Activated B cell treated with CpG ODN at 0.5 μM for 24 hours (primary cell): ENCODE measurements at regions of chr9 and their contacts with region 1.

Region 1: DNA sequence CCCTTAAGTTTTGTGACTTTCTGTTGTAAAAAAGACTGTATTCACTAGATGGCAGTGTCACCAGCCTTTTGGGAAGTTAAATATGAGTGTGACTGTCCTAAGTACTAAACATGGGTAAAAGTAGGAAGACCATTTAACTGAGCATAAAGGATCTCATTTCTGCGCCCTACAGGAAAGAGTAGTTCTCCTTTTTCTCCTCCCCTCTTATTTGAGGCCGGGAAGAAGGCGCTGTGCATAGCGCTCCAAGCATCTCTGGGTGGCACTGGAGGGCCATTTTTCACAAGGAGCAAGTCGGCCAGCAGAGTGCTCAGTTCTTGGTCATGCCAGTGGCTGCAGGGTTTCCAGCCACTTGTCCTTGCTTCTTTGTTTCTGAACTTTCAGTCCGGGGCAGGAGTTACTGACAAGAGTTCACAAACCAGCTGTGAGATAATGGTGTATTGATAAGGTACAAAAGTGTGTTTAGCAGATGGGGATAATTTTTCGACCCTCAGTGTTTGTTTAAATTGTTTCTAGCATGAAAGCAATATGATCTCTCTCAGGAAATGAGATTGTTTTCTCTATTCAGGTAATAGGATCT is 227.6 kb upstream of the DMRT1 start:
- DNase-seq: no peak
- ATAC-seq: peak; percentile 49
- H3K4me3 Mint-ChIP-seq: no peak overlapping the region
- H3K27ac Mint-ChIP-seq: no peak overlapping the region
- H3K4me1 Mint-ChIP-seq: peaks cover 7% of the 10 kb centered on the region
- H3K27me3 Mint-ChIP-seq: no peaks in the 10 kb centered on the region
- CTCF ChIP-seq: no peak

Region 2: DNA sequence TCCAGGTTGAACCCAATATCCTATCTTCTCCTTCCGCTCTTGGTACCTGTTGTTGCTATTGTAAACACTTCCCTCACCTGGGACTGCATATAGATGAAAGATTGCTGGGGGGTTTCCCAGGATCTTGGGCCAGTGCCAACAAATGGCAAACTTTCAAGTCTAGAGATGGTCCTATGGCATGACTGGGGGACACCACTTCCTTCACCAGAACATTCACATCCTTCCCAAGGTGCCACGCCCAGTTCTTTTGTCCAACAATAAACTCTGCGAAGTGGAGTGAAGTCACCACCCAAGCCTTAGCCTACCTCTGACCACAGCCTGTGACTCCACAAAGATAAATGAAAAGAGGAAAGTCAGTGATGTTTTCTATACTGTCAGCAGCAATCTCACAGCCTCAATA is 364.8 kb before region 1 on chr9:
- CTCF ChIA-PET with region 1: no interaction called
- POLR2A ChIA-PET with region 1: no interaction called
- intact Hi-C with region 1: no loop called
- DNase-seq: no peak
- ATAC-seq: no peak
- H3K4me3 Mint-ChIP-seq: no peak overlapping the region
- H3K27ac Mint-ChIP-seq: no peak overlapping the region
- H3K4me1 Mint-ChIP-seq: peaks cover 13% of the 10 kb centered on the region
- H3K27me3 Mint-ChIP-seq: no peaks in the 10 kb centered on the region
- CTCF ChIP-seq: no peak

Region 3: DNA sequence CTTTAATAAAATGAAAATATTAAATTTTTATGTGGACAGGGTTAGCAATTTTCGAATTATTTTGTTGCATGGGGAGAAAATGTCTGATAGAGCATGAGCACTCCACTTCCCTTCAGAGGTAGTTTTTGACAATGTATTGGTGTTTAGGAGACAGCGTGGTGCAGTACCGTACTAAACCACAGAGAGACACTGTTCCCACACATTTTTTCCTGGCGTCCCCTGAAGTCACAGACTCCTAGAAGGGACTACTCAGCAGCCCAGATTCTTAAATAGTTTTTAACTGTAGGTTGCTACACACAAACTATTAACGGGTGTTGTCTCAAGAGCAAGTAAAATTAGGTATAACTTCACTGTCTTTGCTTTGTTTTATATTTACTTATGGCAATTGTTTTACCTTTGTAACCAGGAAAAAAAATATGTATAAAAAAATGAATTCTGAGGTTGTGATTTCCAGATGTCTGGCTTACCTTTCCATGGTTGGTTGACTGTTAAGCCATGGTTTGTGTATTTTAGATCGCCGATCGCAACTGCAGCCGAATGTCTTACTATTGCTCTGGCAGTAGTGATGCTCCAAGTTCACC is 228.0 kb before region 1 on chr9:
- CTCF ChIA-PET with region 1: no interaction called
- POLR2A ChIA-PET with region 1: no interaction called
- intact Hi-C with region 1: no loop called
- DNase-seq: no peak
- ATAC-seq: no peak
- H3K4me3 Mint-ChIP-seq: no peak overlapping the region
- H3K27ac Mint-ChIP-seq: no peak overlapping the region
- H3K4me1 Mint-ChIP-seq: no peaks in the 10 kb centered on the region
- H3K27me3 Mint-ChIP-seq: no peaks in the 10 kb centered on the region
- CTCF ChIP-seq: no peak

Region 4: GRCh38 chr9:763692-764524 is 150.0 kb after region 1 on chr9:
- CTCF ChIA-PET with region 1: interaction called, 3 read pairs
- POLR2A ChIA-PET with region 1: no interaction called
- intact Hi-C with region 1: loop called (anchors 1 kb)
- DNase-seq: no peak
- ATAC-seq: peak; percentile 88
- H3K4me3 Mint-ChIP-seq: no peak overlapping the region
- H3K27ac Mint-ChIP-seq: no peak overlapping the region
- H3K4me1 Mint-ChIP-seq: peaks cover 5% of the 10 kb centered on the region
- H3K27me3 Mint-ChIP-seq: peaks cover 36% of the 10 kb centered on the region
- CTCF ChIP-seq: no peak

Region 5: DNA sequence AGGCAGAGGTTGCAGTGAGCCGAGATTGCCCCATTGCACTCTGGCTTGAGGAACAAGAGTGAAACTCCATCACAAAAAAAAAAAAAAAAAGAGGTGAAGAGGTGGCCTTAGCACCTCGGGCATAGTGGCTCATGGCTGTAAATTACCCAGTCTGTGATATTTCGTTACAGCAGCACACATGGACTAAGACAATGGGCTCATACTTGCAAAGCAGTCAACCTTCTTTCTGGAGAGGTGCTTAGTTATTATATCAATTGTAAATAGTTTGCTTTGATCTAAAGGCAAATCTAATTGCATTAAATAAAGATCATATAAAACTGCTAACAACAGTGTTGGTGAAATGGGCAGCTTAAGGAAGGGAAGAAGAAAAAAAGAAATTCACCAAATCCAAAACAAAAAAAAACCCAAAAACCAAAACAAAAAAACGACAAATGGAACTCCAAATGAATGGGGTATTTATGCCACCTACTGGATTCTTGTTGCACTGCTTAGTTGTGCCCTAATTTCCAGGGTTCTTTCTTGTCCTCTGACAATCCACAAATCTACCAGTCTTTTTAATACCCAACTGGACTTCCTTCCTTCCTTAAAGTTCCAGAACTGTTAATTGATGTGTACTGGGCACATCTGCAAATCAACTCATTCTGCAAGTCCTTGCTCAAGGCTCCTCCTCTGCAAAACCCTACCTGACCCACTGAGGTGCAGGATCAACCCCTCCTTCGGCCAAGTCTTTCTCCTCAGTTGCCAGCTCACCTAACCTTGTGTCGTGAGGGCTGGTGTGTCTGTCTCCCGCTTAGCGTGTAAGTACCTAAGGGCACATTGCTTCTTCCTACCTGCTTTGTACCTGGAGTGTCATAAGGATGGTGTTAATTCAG is 192.7 kb after region 1 on chr9:
- CTCF ChIA-PET with region 1: no interaction called
- POLR2A ChIA-PET with region 1: no interaction called
- intact Hi-C with region 1: loop called (anchors 1 kb)
- DNase-seq: no peak
- ATAC-seq: no peak
- H3K4me3 Mint-ChIP-seq: no peak overlapping the region
- H3K27ac Mint-ChIP-seq: no peak overlapping the region
- H3K4me1 Mint-ChIP-seq: no peaks in the 10 kb centered on the region
- H3K27me3 Mint-ChIP-seq: no peaks in the 10 kb centered on the region
- CTCF ChIP-seq: no peak

Region 6: DNA sequence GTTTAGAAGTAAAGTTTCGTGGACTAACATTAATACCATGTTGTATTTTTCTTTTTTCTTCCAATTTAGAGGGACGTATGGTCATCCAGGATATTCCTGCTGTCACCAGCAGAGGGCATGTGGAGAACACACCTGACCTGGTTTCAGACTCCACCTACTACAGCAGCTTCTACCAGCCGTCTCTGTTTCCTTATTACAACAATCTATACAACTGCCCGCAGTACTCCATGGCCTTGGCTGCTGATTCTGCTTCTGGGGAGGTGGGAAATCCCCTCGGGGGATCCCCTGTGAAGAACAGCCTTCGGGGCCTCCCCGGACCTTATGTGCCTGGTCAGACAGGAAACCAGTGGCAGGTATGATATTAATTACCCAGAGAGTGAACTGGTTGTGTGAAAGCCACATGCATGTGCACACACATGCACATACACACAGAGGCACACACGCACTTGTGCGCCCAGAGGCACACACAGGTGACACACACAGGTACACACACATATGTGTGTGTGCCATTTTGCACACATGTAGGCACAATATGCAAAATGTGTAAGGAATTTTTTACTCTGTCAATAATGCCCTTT is 280.1 kb after region 1 on chr9:
- CTCF ChIA-PET with region 1: no interaction called
- POLR2A ChIA-PET with region 1: no interaction called
- intact Hi-C with region 1: loop called (anchors 5 kb)
- DNase-seq: peak; percentile 38
- ATAC-seq: peak; percentile 98
- H3K4me3 Mint-ChIP-seq: no peak overlapping the region
- H3K27ac Mint-ChIP-seq: peak overlapping the region; percentile 47
- H3K4me1 Mint-ChIP-seq: peaks cover 13% of the 10 kb centered on the region
- H3K27me3 Mint-ChIP-seq: peaks cover 18% of the 10 kb centered on the region
- CTCF ChIP-seq: no peak

Region 7: DNA sequence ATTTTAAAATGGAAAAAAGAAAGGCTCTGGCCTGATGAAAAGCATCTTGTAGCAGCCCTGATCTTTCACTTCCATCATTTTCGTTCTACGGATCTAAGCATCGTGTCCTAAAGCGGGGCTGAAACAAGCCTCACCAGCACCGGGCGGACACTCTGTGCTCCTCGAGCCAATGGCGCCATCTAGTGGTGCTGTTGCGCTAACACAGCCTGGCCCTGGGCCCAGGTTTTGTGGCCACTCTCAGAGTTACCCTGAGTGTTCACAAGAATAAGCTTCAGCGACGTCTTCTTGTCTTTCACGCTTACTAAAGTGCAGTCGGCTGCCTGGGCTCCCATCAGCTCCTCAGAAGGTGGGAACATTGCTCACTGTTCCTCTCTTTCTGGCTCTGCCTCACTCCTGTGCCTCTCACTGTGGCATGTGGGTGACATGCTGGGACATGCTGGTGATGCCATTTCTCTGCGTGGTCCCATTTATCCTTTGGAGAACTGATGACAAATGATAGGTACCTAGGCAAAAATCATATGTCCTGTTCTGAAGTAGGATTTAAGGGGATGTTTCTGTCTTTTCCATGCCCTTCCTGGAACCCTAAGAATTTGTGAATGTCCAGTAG is 395.3 kb after region 1 on chr9:
- CTCF ChIA-PET with region 1: interaction called, 3 read pairs
- POLR2A ChIA-PET with region 1: no interaction called
- intact Hi-C with region 1: loop called (anchors 1 kb)
- DNase-seq: peak; percentile 52
- ATAC-seq: peak; percentile 95
- H3K4me3 Mint-ChIP-seq: no peak overlapping the region
- H3K27ac Mint-ChIP-seq: no peak overlapping the region
- H3K4me1 Mint-ChIP-seq: no peaks in the 10 kb centered on the region
- H3K27me3 Mint-ChIP-seq: peaks cover 29% of the 10 kb centered on the region
- CTCF ChIP-seq: peak; percentile 64

Region 8: GRCh38 chr9:2087500-2088313 is 1473.8 kb after region 1 on chr9:
- CTCF ChIA-PET with region 1: no interaction called
- POLR2A ChIA-PET with region 1: no interaction called
- intact Hi-C with region 1: loop called (anchors 5 kb)
- DNase-seq: no peak
- ATAC-seq: peak; percentile 83
- H3K4me3 Mint-ChIP-seq: no peak overlapping the region
- H3K27ac Mint-ChIP-seq: no peak overlapping the region
- H3K4me1 Mint-ChIP-seq: no peaks in the 10 kb centered on the region
- H3K27me3 Mint-ChIP-seq: no peaks in the 10 kb centered on the region
- CTCF ChIP-seq: peak; percentile 40